ENCODE measurements at regions of chr18 and their contacts with region 1.

Region 1: GRCh38 chr18:36572135-36572856 is 256.5 kb downstream of the TPGS2 start:
- DNase-seq: peak; percentile 52 to 87 (median 61)
- H3K4me3 ChIP-seq: no peak overlapping the region
- H3K27ac ChIP-seq: no peak overlapping the region
- H3K4me1 ChIP-seq: no peaks in the 10 kb centered on the region
- H3K27me3 ChIP-seq: no peaks in the 10 kb centered on the region
- CTCF ChIP-seq: peak in 5 of 6 experiments; percentile 42 to 62 (median 56)
- POLR2A ChIP-seq: no peak

Region 2: GRCh38 chr18:36296650-36297416 is 275.5 kb before region 1 on chr18:
- intact Hi-C with region 1: loop called (anchors 5 kb)
- DNase-seq: peak; percentile 72 to 84 (median 79)
- H3K4me3 ChIP-seq: peak overlapping the region in 3 of 4 donors; percentile 26 to 77 (median 33)
- H3K27ac ChIP-seq: peak overlapping the region in 3 of 5 donors; percentile 45 to 80 (median 64)
- H3K4me1 ChIP-seq: peaks cover 6 to 12% of the 10 kb centered on the region in 2 donors
- H3K27me3 ChIP-seq: no peaks in the 10 kb centered on the region
- CTCF ChIP-seq: peak; percentile 27 to 47 (median 44)
- POLR2A ChIP-seq: no peak

Region 3: DNA sequence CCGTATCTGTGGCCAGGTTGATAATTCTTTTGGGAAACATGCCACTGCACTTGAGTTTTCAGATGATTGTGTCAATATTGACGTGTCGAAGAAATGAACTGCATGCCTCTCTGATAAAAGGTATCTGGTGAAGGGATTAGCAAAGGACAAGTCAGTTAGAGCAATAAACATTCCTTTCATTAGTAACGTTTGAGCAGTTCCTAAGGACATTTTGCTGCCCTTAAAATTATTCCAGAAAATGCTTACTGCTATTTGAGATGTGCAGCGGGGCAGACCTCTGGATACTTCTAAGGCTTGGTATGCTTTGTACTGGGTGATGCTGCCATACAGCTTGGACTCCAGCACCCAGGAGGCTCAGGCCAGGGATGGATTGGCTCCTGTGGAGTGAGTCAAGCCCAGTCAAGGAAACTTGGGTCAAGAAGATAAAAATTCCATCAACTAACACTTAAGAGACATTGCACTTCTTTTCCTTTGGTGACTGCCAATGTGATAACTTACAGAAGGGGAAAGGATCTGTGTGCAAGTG is 108.1 kb before region 1 on chr18:
- intact Hi-C with region 1: loop called in 1 of 2 experiments (anchors 10 kb)
- DNase-seq: no peak
- H3K4me3 ChIP-seq: no peak overlapping the region
- H3K27ac ChIP-seq: no peak overlapping the region
- H3K4me1 ChIP-seq: no peaks in the 10 kb centered on the region
- H3K27me3 ChIP-seq: no peaks in the 10 kb centered on the region
- CTCF ChIP-seq: no peak
- POLR2A ChIP-seq: no peak

Region 4: GRCh38 chr18:36633961-36634412 is 61.7 kb after region 1 on chr18:
- intact Hi-C with region 1: no loop called
- DNase-seq: no peak
- H3K4me3 ChIP-seq: no peak overlapping the region
- H3K27ac ChIP-seq: no peak overlapping the region
- H3K4me1 ChIP-seq: no peaks in the 10 kb centered on the region
- H3K27me3 ChIP-seq: no peaks in the 10 kb centered on the region
- CTCF ChIP-seq: no peak
- POLR2A ChIP-seq: no peak

Measured in adrenal gland (tissue), 19 donors.